ENCODE measurements at regions of chr1 and their contacts with region 1.

Region 1: GRCh38 chr1:11012250-11013171 is at the start of gene TARDBP:
- DNase-seq: peak; percentile 44 to 95
- H3K4me3 ChIP-seq: peak within 1 kb of the TSS; percentile 93 to 98 (median 95)
- H3K27ac ChIP-seq: peak within 1 kb of the TSS; percentile 99
- H3K4me1 ChIP-seq: peaks cover 0 to 10% (median 6%) of the 10 kb centered on the region in 4 experiments; a peak in 5 of 7 replicates
- H3K27me3 ChIP-seq: no peaks in the 10 kb centered on the region
- CTCF ChIP-seq: no peak
- EP300 ChIP-seq: peak in 1 of 2 experiments; percentile 100; a peak in 2 of 3 replicates
- POLR2A ChIP-seq: peak; percentile 95 to 96
- RAD21 ChIP-seq: no peak
- total RNA-seq, gene TARDBP: 232 and 240 TPM in 2 replicates

Region 2: GRCh38 chr1:10867138-10867721 is 145.3 kb before region 1 on chr1:
- CTCF ChIA-PET with region 1: no interaction called
- POLR2A ChIA-PET with region 1: no interaction called
- DNase-seq: peak in 1 of 2 experiments; percentile 90
- H3K4me3 ChIP-seq: peak overlapping the region; percentile 13 to 60 (median 23); a peak in 5 of 8 replicates
- H3K27ac ChIP-seq: no peak overlapping the region
- H3K4me1 ChIP-seq: peaks cover 2 to 14% (median 5%) of the 10 kb centered on the region in 4 experiments; a peak in 6 of 7 replicates
- H3K27me3 ChIP-seq: peaks cover 1 to 29% (median 9%) of the 10 kb centered on the region in 4 experiments; a peak in 6 of 7 replicates
- CTCF ChIP-seq: peak; percentile 56 to 76 (median 71)
- EP300 ChIP-seq: no peak
- POLR2A ChIP-seq: no peak
- RAD21 ChIP-seq: peak; percentile 44 to 85

Region 3: GRCh38 chr1:10980094-10980577 is 32.4 kb before region 1 on chr1:
- CTCF ChIA-PET with region 1: interaction called, 3 read pairs
- POLR2A ChIA-PET with region 1: interaction called, 16 read pairs
- DNase-seq: peak; percentile 80 to 85
- H3K4me3 ChIP-seq: peak overlapping the region in 3 of 4 experiments; percentile 26 to 47 (median 47); a peak in 5 of 8 replicates
- H3K27ac ChIP-seq: peak overlapping the region; percentile 63; the same call in 1 of the 2 replicates
- H3K4me1 ChIP-seq: peaks cover 14 to 20% (median 16%) of the 10 kb centered on the region in 4 experiments
- H3K27me3 ChIP-seq: no peaks in the 10 kb centered on the region
- CTCF ChIP-seq: peak in 2 of 3 experiments; percentile 33 to 45; a peak in 3 of 4 replicates
- EP300 ChIP-seq: 0 out of 3 replicates have a peak, but pooled peaks of 1 of the 2 experiments have one; percentile 52
- POLR2A ChIP-seq: no peak
- RAD21 ChIP-seq: peak in 1 of 2 experiments; percentile 12; a peak in 1 of 4 replicates

Region 4: DNA sequence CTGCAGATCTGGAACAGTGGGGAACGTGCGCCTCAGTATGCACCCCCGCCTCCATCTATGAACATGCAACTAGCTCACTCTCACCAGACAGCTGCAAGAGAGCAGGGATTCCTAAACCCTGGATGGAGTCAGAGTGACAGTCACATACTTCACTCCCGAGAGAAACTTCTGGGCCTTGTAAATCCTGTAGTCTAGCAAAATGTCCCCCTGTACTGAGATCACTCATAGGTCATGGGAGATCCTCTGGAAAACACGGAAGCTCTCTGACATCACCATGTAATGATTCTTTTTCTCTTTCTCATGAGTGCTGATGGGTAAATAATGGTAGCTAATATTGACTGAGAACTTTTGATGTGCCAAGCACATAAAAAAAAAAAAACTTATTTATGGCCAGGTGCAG is 23.4 kb before region 1 on chr1:
- CTCF ChIA-PET with region 1: interaction called, 3 read pairs
- POLR2A ChIA-PET with region 1: interaction called, 10 read pairs
- DNase-seq: no peak
- H3K4me3 ChIP-seq: no peak overlapping the region
- H3K27ac ChIP-seq: no peak overlapping the region
- H3K4me1 ChIP-seq: peaks cover 0 to 4% (median 2%) of the 10 kb centered on the region in 4 experiments; a peak in 4 of 7 replicates
- H3K27me3 ChIP-seq: no peaks in the 10 kb centered on the region
- CTCF ChIP-seq: no peak
- EP300 ChIP-seq: no peak
- POLR2A ChIP-seq: no peak
- RAD21 ChIP-seq: no peak

Region 5: DNA sequence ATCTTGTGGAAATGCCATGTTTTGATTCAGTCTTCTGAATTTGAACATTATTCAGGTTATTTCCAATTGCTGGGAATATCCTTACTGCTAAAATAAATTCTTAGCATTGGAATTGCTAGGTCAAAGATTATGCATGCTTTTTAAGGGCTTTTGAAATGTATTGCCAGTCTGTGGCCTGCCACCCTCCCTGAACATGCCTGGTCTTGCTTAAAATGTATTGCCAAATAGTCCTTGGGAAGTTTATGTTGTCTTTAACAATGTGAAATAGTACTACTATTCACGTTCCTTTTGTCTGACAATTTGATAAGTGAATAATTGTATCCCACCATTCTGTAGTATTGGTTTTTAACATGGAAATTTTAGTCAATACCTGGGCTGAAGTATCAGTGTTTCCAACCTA is 13.5 kb after region 1 on chr1:
- CTCF ChIA-PET with region 1: interaction called, 3 read pairs
- POLR2A ChIA-PET with region 1: interaction called, 19 read pairs
- DNase-seq: no peak
- H3K4me3 ChIP-seq: no peak overlapping the region
- H3K27ac ChIP-seq: no peak overlapping the region
- H3K4me1 ChIP-seq: peaks cover 0 to 4% (median 0%) of the 10 kb centered on the region in 4 experiments; a peak in 3 of 7 replicates
- H3K27me3 ChIP-seq: no peaks in the 10 kb centered on the region
- CTCF ChIP-seq: no peak
- EP300 ChIP-seq: no peak
- POLR2A ChIP-seq: no peak
- RAD21 ChIP-seq: no peak

Region 6: DNA sequence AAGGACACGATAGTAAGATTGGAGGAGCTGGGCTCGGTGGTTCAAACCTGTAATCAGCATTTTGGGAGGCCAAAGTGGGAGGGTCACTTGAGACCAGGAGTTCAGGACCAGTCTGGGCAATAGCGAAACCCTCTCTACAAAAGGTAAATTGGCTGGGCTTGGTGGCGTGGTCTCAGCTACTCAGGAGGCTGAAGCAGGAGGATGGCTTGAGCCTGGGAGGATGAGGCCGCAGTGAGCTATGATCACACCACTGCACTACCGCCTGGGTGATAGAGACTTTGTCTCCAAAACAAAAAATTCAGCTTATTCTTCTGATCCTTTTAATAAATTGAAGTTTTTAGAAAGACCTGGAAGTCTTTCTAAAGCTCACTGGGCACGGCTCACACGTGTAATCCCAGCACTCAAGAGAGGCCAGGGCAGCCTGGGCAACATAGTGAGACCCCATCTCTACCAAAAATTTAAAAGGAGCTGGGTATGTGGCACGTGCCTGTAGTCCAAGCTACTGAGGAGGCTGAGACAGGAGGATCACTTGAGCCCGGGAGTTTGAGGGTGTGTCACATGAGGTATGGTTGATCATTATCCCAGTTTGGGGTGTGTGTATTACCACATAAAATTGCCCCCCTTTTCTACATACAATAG is 19.2 kb after region 1 on chr1:
- CTCF ChIA-PET with region 1: interaction called, 5 read pairs
- POLR2A ChIA-PET with region 1: interaction called, 17 read pairs
- DNase-seq: peak in 1 of 2 experiments; percentile 40
- H3K4me3 ChIP-seq: no peak overlapping the region
- H3K27ac ChIP-seq: no peak overlapping the region
- H3K4me1 ChIP-seq: peaks cover 0 to 4% (median 0%) of the 10 kb centered on the region in 4 experiments; a peak in 2 of 7 replicates
- H3K27me3 ChIP-seq: no peaks in the 10 kb centered on the region
- CTCF ChIP-seq: no peak
- EP300 ChIP-seq: no peak
- POLR2A ChIP-seq: no peak
- RAD21 ChIP-seq: no peak

Region 7: DNA sequence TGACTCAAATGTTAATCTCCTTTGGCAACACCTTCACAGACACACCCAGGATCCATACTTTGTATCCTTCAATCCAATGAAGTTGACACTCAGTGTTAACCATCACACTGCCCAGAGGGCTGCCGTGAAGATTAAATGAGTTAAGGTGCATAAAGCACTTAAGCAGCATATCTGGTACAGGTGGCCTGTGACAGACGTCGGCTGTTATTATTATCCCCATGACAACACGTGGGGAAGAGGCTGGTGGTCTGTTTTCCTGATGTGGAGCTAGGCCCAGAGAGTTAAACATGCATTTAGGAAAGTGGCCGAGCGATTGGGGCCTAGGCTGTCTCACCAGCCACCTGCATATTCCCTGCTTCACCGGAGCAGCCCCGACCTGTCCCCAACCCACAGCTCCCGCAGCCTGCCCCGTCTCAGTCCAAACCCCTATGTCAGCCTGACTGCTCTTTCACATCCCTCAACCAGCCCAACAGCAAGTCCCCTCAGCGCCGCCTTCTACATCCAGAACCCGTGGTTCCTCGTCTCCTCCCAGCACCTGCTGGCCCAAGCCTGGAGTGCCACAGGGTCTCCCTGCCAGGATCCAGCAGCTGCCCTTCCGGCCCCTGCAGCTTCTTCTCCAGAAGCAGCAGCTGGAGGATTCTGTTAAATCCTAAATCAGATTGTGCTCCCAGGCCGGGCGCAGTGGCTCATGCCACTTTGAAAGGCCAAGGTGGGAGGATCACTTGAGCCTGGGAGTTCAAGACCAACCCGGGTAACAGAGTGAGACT is 563.8 kb after region 1 on chr1:
- CTCF ChIA-PET with region 1: no interaction called
- POLR2A ChIA-PET with region 1: no interaction called
- DNase-seq: no peak
- H3K4me3 ChIP-seq: no peak overlapping the region
- H3K27ac ChIP-seq: no peak overlapping the region
- H3K4me1 ChIP-seq: no peaks in the 10 kb centered on the region
- H3K27me3 ChIP-seq: no peaks in the 10 kb centered on the region
- CTCF ChIP-seq: no peak
- EP300 ChIP-seq: no peak
- POLR2A ChIP-seq: no peak
- RAD21 ChIP-seq: no peak